ENCODE measurements at regions of chr2 and their contacts with region 1.

Region 1: GRCh38 chr2:176088048-176088936 is 4.2 kb upstream of the HOXD13 start:
- DNase-seq: peak in 1 of 2 experiments; percentile 55
- ATAC-seq: peak; percentile 77 to 87
- H3K4me3 ChIP-seq: peak overlapping the region; percentile 22; the same call in 2 of the 3 replicates
- H3K27ac ChIP-seq: 0 out of 6 replicates have a peak overlapping the region, but pooled peaks of 1 of the 2 experiments have one; percentile 47
- H3K4me1 ChIP-seq: peaks cover 7% of the 10 kb centered on the region; the same call in 1 of the 3 replicates
- CTCF ChIP-seq: peak; percentile 64
- EP300 ChIP-seq: no peak
- POLR2A ChIP-seq: no peak
- RAD21 ChIP-seq: peak; percentile 55 to 68

Region 2: DNA sequence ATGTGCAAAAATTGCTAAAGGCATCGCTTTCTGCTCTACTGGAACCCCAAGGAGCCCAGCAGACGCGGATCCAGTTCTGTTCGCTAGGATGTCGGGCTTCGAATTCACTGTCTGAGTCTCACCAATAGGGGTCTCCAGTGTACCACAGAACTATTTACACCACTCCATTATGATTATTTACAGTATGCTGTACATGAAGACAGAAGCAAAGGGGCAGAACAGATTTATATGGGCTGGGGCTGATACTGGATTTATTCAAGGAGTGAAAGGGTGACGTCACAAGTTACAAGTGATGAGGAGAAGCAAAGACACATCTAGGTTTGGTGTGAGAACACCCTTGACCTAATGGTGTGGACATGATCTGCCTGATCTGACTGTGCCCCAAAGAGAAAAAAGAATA is 721.5 kb before region 1 on chr2:
- CTCF ChIA-PET with region 1: interaction called, 11 read pairs
- POLR2A ChIA-PET with region 1: no interaction called
- DNase-seq: peak; percentile 35 to 47
- ATAC-seq: peak; percentile 92 to 98
- H3K4me3 ChIP-seq: no peak overlapping the region
- H3K27ac ChIP-seq: no peak overlapping the region
- H3K4me1 ChIP-seq: no peaks in the 10 kb centered on the region
- CTCF ChIP-seq: peak; percentile 75
- EP300 ChIP-seq: no peak
- POLR2A ChIP-seq: no peak
- RAD21 ChIP-seq: peak; percentile 74 to 81

Region 3: DNA sequence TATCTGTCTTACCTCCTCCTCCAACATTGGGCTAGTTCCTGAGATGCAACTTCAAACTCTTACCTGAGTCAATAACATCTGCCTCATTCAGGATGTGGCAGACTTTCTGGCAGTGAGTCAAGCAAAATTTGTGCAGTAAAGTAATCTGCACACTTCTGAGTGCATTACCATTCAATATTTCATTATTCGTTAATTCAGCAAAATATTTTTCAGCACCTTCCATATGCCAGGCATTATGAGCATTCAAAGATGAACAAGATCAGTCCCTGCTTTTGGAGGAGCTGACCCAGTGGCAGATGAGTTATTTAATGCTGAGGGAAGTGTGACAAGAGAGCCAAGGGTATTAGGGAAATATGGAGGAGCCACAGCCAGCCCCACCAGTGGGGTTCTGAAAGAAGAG is 426.0 kb before region 1 on chr2:
- CTCF ChIA-PET with region 1: no interaction called
- POLR2A ChIA-PET with region 1: no interaction called
- DNase-seq: no peak
- ATAC-seq: no peak
- H3K4me3 ChIP-seq: no peak overlapping the region
- H3K27ac ChIP-seq: no peak overlapping the region
- H3K4me1 ChIP-seq: no peaks in the 10 kb centered on the region
- CTCF ChIP-seq: no peak
- EP300 ChIP-seq: no peak
- POLR2A ChIP-seq: no peak
- RAD21 ChIP-seq: no peak

Region 4: GRCh38 chr2:175690113-175690837 is 398.0 kb before region 1 on chr2:
- CTCF ChIA-PET with region 1: interaction called, 27 read pairs
- POLR2A ChIA-PET with region 1: no interaction called
- DNase-seq: peak in 1 of 2 experiments; percentile 67
- ATAC-seq: peak; percentile 82 to 90; a peak in 5 of 6 replicates
- H3K4me3 ChIP-seq: no peak overlapping the region
- H3K27ac ChIP-seq: no peak overlapping the region
- H3K4me1 ChIP-seq: no peaks in the 10 kb centered on the region
- CTCF ChIP-seq: peak; percentile 73
- EP300 ChIP-seq: no peak
- POLR2A ChIP-seq: no peak
- RAD21 ChIP-seq: peak; percentile 71 to 74